ENCODE measurements at regions of chr4 and their contacts with region 1.

Region 1: DNA sequence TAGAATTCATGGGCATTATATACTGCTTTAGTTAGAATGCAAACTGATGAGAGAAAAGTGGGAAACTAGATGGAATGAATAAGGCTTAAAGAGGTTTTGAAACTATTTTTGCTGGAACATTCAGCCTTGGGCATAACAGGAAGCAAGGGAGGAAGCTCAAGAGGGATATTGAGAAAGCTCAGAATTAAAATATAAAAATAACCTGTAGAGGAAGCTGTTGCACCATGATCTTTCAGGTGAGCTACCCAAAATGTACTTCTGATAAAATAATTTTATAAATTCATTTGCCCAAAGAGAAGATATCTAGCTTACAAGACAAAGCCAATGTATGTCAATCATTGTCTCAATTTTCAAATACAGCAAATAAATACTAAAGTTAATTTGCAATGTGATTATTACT is 11.3 kb downstream of the GC start:
- DNase-seq: no peak
- H3K4me3 ChIP-seq: no peak overlapping the region
- H3K27ac ChIP-seq: no peak overlapping the region
- H3K4me1 ChIP-seq: no peaks in the 10 kb centered on the region; a peak in 1 of 7 replicates
- H3K27me3 ChIP-seq: no peaks in the 10 kb centered on the region
- CTCF ChIP-seq: peak in 2 of 3 experiments; percentile 17 to 33; a peak in 2 of 4 replicates
- EP300 ChIP-seq: no peak
- POLR2A ChIP-seq: no peak
- RAD21 ChIP-seq: peak; percentile 71 to 81

Region 2: GRCh38 chr4:72286185-72286584 is 513.6 kb after region 1 on chr4:
- CTCF ChIA-PET with region 1: interaction called, 29 read pairs
- POLR2A ChIA-PET with region 1: no interaction called
- DNase-seq: no peak
- H3K4me3 ChIP-seq: no peak overlapping the region
- H3K27ac ChIP-seq: no peak overlapping the region
- H3K4me1 ChIP-seq: no peaks in the 10 kb centered on the region
- H3K27me3 ChIP-seq: no peaks in the 10 kb centered on the region
- CTCF ChIP-seq: no peak
- EP300 ChIP-seq: no peak
- POLR2A ChIP-seq: no peak
- RAD21 ChIP-seq: peak in 1 of 2 experiments; percentile 32; a peak in 2 of 4 replicates

Measured in H1 (cell line).